ENCODE measurements at regions of chr9 and their contacts with region 1.

Region 1: GRCh38 chr9:92764988-92765936 is 629 bp upstream of the BICD2 start:
- H3K4me3 Mint-ChIP-seq: peak overlapping the region; percentile 98
- H3K27ac Mint-ChIP-seq: peak overlapping the region; percentile 91
- H3K4me1 Mint-ChIP-seq: peaks cover 57% of the 10 kb centered on the region
- H3K27me3 Mint-ChIP-seq: peaks cover 3% of the 10 kb centered on the region

Region 2: GRCh38 chr9:92669890-92670708 is 95.2 kb before region 1 on chr9 and contains the start of gene IPPK:
- intact Hi-C with region 1: loop called (anchors 1 kb)
- H3K4me3 Mint-ChIP-seq: peak within 1 kb of the TSS; percentile 84
- H3K27ac Mint-ChIP-seq: peak within 1 kb of the TSS; percentile 89
- H3K4me1 Mint-ChIP-seq: peaks cover 43% of the 10 kb centered on the region
- H3K27me3 Mint-ChIP-seq: no peaks in the 10 kb centered on the region

Region 3: DNA sequence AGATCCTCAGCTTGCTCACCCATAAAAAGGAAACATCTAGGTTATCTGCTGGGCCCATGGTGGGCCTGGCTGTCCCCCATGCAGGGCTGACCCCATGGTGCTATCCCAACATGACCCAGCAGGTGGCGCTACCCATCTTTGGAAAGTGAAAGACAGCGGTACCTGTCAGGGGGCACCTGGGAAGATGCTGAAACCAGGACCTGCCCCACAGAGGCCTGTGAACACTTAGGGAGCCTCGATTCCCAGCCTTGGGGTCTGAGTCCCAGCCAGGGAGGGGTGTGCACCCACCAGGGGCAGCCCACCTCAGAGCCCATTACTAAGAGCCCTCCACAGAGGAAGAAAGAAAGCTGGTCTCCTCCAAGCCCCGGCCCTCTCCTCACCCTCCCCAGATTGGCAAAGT is 48.7 kb before region 1 on chr9:
- intact Hi-C with region 1: loop called (anchors 1 kb)
- H3K4me3 Mint-ChIP-seq: no peak overlapping the region
- H3K27ac Mint-ChIP-seq: no peak overlapping the region
- H3K4me1 Mint-ChIP-seq: peaks cover 35% of the 10 kb centered on the region
- H3K27me3 Mint-ChIP-seq: no peaks in the 10 kb centered on the region

Region 4: DNA sequence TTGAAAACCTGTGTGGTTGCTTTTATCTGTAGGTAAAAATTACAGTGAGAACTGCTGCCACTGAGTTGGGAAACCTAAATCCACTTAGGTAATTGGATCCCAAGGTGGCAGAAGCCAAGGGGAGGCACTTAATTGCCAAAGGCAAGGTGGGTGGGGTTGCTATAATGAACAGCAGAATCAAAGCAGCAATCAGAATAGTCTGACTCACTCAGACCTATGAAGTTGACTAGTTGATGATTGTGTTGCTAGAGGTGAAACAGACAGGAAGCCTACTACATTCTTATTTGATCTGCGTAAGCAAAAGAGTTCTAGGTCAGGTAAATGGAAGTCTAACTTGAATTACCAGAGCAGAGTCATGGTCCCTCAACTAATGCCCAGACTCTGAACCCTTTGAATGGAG is 16.7 kb after region 1 on chr9:
- intact Hi-C with region 1: loop called (anchors 2 kb)
- H3K4me3 Mint-ChIP-seq: no peak overlapping the region
- H3K27ac Mint-ChIP-seq: no peak overlapping the region
- H3K4me1 Mint-ChIP-seq: peaks cover 15% of the 10 kb centered on the region
- H3K27me3 Mint-ChIP-seq: no peaks in the 10 kb centered on the region

Region 5: DNA sequence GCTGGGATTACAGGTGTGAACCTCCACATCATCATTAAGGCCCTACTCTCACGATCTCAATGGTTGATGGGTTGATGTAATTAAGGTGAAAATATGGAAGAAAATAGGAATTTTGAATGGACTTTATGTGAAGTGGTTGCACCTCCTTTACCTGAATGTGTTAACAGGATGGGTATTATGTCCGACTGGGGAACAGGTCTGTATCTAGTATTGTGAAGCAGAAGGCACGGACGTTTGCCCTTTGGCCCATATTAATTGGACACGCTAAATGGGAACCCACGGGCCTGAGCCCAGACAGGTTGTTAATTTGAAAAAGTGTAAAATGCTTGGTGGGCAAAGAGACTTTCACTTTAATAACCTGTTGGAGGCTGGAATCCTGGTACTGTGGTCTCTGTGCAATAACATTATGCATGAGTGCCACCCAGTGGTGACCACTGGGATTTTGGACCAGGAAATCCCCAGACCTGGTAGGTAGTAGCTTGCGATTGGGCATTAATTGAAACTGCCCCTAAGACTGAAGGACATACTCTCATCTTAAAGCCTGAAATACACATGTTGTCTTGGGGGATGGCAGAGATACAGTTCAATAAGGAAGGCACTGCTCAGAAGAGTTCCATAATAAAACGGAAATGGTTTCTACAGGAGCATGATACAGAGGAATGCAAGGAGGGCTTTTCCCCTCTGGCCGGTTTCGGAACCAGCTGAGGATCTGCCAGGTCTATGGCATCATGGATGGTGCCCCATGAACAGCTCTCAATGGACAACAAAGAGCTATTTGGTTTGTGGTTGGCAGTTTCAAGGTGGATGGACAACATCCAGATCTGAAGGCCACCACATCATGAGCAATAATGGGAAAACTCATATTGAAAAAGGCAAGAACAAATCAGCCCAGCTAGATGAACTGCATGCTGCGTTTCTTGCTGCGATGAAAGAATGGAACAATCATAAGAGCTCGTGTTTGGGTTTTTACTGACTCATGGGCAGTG is 25.6 kb after region 1 on chr9:
- intact Hi-C with region 1: loop called (anchors 1 kb)
- H3K4me3 Mint-ChIP-seq: no peak overlapping the region
- H3K27ac Mint-ChIP-seq: no peak overlapping the region
- H3K4me1 Mint-ChIP-seq: peaks cover 8% of the 10 kb centered on the region
- H3K27me3 Mint-ChIP-seq: peaks cover 3% of the 10 kb centered on the region